GM10248 (cell line): ENCODE measurements at regions of chr4 and their contacts with region 1.

Region 1: GRCh38 chr4:48296365-48296764 is 26.7 kb upstream of the TEC start:
- DNase-seq: peak; percentile 44
- CTCF ChIP-seq: no peak

Region 2: GRCh38 chr4:48307528-48307927 is 11.2 kb after region 1 on chr4:
- CTCF ChIA-PET with region 1: interaction called, 15 read pairs
- POLR2A ChIA-PET with region 1: no interaction called
- DNase-seq: no peak
- CTCF ChIP-seq: no peak